HepG2 (cell line): ENCODE measurements at regions of chr14 and their contacts with region 1.

Region 1: GRCh38 chr14:24431569-24432258 is 2.0 kb downstream of the KHNYN start:
- DNase-seq: peak; percentile 97
- ATAC-seq: peak; percentile 66
- H3K4me3 ChIP-seq: peak overlapping the region in 2 of 3 experiments; percentile 80 to 82; a peak in 4 of 6 replicates
- H3K27ac ChIP-seq: no peak overlapping the region
- H3K4me1 ChIP-seq: peaks cover 52% of the 10 kb centered on the region
- H3K27me3 ChIP-seq: no peaks in the 10 kb centered on the region; a peak in 1 of 5 replicates
- CTCF ChIP-seq: peak; percentile 100
- EP300 ChIP-seq: 0 out of 4 replicates have a peak, but pooled peaks of 1 of the 2 experiments have one; percentile 45
- POLR2A ChIP-seq: peak in 1 of 2 experiments; percentile 21; a peak in 2 of 4 replicates
- RAD21 ChIP-seq: peak; percentile 100

Region 2: DNA sequence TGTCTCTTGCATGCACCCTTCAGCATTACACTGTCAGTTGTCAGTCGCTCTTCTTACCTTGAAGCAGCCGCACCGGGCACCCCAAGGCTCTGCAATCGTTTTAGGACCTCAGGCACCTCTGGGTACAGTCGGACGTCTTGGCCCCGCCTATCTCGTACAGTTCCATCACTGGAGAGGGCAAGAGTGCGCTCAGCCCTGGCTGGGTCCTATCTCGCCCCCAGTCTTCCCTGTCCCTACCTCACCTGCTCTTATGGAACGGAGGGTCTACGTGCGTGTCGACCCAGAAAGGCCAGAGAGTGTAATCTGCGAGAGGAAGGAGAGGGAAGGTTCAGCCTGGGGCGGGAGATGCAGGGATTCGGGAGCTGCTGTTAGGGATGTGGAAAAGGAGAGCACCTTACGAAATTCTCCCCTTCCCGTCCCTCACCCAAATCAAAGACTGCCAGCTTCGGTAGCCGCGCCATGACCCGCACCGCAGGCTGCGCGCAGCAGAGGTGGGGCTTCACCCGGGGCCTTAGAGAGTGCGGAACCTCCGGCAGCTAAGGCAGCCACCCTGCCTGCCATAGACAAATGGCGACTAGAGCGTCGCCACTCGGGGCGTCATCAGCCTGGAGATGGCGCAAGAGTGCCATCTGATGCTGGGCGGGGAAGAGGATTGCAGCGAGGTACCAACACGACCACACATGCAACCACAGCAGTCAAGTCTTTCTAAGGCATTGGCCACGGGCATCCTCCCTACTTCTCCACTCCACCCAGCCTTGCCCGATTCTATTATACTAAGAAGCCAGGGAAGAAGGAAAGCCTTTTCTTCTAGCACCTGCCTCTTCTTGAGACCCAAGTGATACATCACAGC is 216.0 kb before region 1 on chr14 and contains the start of gene MDP1:
- CTCF ChIA-PET with region 1: no interaction called
- POLR2A ChIA-PET with region 1: interaction called, 13 read pairs
- in situ Hi-C with region 1: no loop called
- intact Hi-C with region 1: no loop called
- DNase-seq: peak; percentile 95
- ATAC-seq: peak; percentile 81
- H3K4me3 ChIP-seq: peak within 1 kb of the TSS; percentile 67 to 98 (median 81)
- H3K27ac ChIP-seq: peak within 1 kb of the TSS; percentile 72
- H3K4me1 ChIP-seq: peaks cover 39% of the 10 kb centered on the region
- H3K27me3 ChIP-seq: no peaks in the 10 kb centered on the region; a peak in 1 of 5 replicates
- CTCF ChIP-seq: peak; percentile 100
- EP300 ChIP-seq: peak in 1 of 2 experiments; percentile 74; a peak in 3 of 4 replicates
- POLR2A ChIP-seq: peak in 1 of 2 experiments; percentile 97; a peak in 2 of 4 replicates
- RAD21 ChIP-seq: peak; percentile 96
- total RNA-seq, gene MDP1: 48.7 and 66.0 TPM in 2 replicates

Region 3: DNA sequence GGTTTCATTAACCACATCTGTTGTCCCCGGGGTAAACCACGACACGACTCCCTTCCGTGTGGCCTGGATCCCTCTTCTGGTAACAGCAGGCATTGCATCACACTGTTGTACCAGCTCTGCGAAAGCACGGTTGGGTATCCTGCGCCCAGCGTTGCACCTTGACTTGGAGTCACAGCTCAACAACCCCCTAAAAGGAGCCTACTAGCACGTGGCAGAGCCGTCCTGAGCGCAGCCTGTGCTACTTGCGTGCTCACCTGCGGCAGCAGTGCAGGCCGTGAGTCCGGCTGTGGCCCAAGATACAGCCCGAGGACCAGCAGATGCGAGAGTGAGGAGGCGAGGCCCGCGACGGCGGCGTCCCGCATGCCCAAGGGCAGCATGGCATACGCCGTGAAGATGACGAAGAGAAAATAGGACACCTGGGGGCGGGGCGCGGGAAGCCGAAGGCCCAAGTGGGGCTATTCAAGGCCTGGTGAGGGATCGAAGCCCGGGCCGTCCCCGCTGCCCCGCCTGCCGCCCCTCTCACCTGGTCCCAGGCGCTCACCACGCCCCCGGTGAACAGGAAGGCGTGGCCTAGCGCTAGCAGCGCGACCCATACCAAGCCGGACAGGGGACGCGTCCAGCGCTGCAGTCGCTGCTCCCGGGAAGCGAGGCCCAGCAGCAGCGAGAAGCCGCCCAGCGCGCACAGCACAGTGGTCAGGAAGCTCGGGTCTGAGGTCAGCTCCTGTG is 99.3 kb before region 1 on chr14:
- CTCF ChIA-PET with region 1: interaction called, 235 read pairs
- POLR2A ChIA-PET with region 1: interaction called, 98 read pairs
- in situ Hi-C with region 1: loop called (anchors 5 kb)
- intact Hi-C with region 1: loop called (anchors 1 kb)
- DNase-seq: peak; percentile 86
- ATAC-seq: peak; percentile 83
- H3K4me3 ChIP-seq: peak overlapping the region; percentile 30 to 70 (median 42)
- H3K27ac ChIP-seq: no peak overlapping the region
- H3K4me1 ChIP-seq: peaks cover 36% of the 10 kb centered on the region
- H3K27me3 ChIP-seq: peaks cover 29 to 86% of the 10 kb centered on the region in 2 experiments
- CTCF ChIP-seq: peak; percentile 97
- EP300 ChIP-seq: 0 out of 4 replicates have a peak, but pooled peaks of 1 of the 2 experiments have one; percentile 19
- POLR2A ChIP-seq: no peak
- RAD21 ChIP-seq: peak; percentile 72

Region 4: DNA sequence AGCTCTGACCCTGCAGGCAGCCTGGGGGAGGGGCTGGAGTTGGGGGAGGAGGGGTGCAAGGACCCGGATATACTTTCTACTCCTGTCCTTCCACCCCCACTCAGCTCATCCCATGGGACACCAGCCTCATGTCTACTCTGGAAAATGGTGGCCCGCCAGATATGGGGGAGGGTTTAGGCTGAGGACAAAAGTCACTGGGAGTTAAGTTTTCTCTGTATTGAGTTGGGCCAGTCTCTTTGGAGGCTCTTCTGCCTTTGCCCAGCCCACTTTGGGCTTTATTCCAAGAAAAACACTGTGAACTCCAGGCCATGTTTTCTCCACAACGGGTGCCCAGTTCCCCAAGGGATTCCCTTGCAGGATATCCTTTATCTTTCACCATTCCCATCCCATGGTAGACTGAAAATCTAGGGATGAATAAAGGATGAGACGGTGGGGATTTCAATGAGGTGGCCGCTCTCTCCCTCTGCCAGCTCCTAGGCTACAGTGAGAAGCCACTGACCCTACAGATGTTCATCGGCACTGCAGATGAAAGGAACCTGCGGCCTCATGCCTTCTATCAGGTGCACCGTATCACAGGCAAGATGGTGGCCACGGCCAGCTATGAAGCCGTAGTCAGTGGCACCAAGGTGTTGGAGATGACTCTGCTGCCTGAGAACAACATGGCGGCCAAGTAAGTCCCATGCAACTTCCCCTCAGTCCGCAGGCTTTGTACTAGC is 58.9 kb before region 1 on chr14:
- CTCF ChIA-PET with region 1: interaction called, 295 read pairs
- POLR2A ChIA-PET with region 1: interaction called, 19 read pairs
- in situ Hi-C with region 1: loop called (anchors 5 kb)
- intact Hi-C with region 1: no loop called
- DNase-seq: no peak
- ATAC-seq: no peak
- H3K4me3 ChIP-seq: no peak overlapping the region
- H3K27ac ChIP-seq: no peak overlapping the region
- H3K4me1 ChIP-seq: peaks cover 10% of the 10 kb centered on the region
- H3K27me3 ChIP-seq: peaks cover 22 to 53% of the 10 kb centered on the region in 2 experiments
- CTCF ChIP-seq: no peak
- EP300 ChIP-seq: no peak
- POLR2A ChIP-seq: no peak
- RAD21 ChIP-seq: no peak

Region 5: DNA sequence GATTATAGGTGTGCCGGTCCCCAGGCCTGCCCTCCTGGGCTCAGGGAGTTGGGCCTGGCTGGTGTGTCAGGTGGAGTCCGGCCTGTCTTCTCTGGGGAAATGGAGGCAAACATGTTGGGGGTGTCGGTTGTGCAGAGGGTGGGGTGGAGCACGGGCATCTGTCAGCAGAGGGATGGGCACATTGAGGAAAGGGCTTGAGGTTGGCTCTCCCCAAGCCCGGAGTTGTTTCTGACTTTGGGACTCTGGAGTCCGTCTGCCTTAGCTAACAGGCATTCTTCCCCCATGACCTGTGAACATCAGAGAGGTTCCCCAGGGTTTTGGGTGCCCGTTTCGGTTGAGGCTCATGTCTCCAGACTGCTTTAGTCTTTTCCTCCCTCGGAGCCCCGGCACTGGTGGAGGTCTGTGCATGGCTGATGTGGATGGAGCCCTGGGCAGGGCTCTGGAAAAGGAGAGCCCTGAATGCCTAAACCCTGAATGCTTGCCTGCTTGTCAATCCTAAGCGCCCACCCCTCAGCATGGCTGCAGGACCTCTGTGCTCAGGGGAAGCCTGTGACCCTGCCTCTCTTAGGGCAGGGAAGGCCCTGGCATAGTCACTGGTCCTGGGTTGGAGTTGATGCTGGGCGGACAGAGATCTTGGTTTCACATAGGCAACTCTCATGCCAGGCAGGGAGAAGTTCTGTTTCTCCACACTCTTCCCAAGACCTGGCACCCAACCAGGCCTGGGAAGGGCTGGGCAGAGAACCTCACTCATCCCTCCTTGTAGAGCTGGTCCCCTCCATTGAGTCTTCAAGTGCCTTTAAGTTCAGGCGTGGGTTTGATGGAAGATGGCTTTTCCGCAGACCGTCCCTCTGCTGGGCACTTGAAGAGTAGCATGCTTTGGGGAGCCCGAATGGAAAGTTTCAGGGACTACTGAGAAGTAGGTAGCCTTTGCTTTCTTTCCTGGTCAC is 20.0 kb before region 1 on chr14:
- CTCF ChIA-PET with region 1: interaction called, 8 read pairs
- POLR2A ChIA-PET with region 1: interaction called, 9 read pairs
- in situ Hi-C with region 1: no loop called
- intact Hi-C with region 1: loop called (anchors 1 kb)
- DNase-seq: peak; percentile 69
- ATAC-seq: peak; percentile 69
- H3K4me3 ChIP-seq: no peak overlapping the region
- H3K27ac ChIP-seq: no peak overlapping the region
- H3K4me1 ChIP-seq: no peaks in the 10 kb centered on the region
- H3K27me3 ChIP-seq: peaks cover 0 to 2% of the 10 kb centered on the region in 2 experiments; a peak in 1 of 5 replicates
- CTCF ChIP-seq: peak; percentile 88
- EP300 ChIP-seq: peak in 1 of 2 experiments; percentile 37; a peak in 1 of 4 replicates
- POLR2A ChIP-seq: no peak
- RAD21 ChIP-seq: peak; percentile 83